Endothelial cell of umbilical vein (primary cell): ENCODE measurements at regions of chr12 and their contacts with region 1.

Region 1: DNA sequence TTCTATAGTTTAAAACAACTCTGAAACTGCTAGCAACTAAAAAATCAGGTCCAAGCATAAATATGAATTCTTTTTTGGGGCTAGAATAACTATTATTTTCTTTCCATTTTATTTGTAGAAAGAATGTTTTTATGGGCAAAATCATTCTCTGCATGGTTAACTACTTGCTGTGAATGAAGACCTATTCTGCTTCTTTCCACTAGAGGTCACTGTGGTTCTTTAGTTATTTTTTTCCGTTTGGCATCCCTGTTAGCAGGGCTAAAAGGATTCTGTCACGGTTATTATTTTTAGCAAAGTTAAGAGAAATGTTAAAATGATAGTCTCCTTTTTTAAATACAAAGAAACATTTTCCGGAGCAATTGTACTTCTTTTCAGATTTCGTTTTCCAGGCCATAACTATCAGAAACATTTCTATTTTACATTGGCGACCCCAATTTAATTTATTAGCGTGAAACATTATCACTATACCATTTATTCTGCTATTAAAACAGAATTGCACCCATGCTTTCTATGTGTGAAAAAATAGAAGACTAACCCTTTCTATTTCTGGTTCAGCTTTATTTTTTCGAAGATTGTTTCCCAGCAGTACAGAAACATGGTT is 404.8 kb downstream of the ATP23 start:
- DNase-seq: peak; percentile 58
- H3K4me3 ChIP-seq: no peak overlapping the region
- H3K27ac ChIP-seq: no peak overlapping the region
- H3K4me1 ChIP-seq: peaks cover 22% of the 10 kb centered on the region
- H3K27me3 ChIP-seq: no peaks in the 10 kb centered on the region
- CTCF ChIP-seq: peak; percentile 34 to 47
- POLR2A ChIP-seq: no peak

Region 2: GRCh38 chr12:58202933-58203718 is 143.0 kb before region 1 on chr12:
- CTCF ChIA-PET with region 1: no interaction called
- POLR2A ChIA-PET with region 1: no interaction called
- dilution Hi-C with region 1: no loop called
- intact Hi-C with region 1: loop called (anchors 5 kb)
- DNase-seq: peak; percentile 90
- H3K4me3 ChIP-seq: no peak overlapping the region
- H3K27ac ChIP-seq: peak overlapping the region; percentile 4
- H3K4me1 ChIP-seq: peaks cover 21% of the 10 kb centered on the region
- H3K27me3 ChIP-seq: no peaks in the 10 kb centered on the region
- CTCF ChIP-seq: no peak
- POLR2A ChIP-seq: no peak

Region 3: GRCh38 chr12:58321414-58321813 is 24.7 kb before region 1 on chr12:
- CTCF ChIA-PET with region 1: no interaction called
- POLR2A ChIA-PET with region 1: no interaction called
- dilution Hi-C with region 1: no loop called
- intact Hi-C with region 1: no loop called
- DNase-seq: no peak
- H3K4me3 ChIP-seq: no peak overlapping the region
- H3K27ac ChIP-seq: no peak overlapping the region
- H3K4me1 ChIP-seq: no peaks in the 10 kb centered on the region
- H3K27me3 ChIP-seq: no peaks in the 10 kb centered on the region
- CTCF ChIP-seq: no peak
- POLR2A ChIP-seq: no peak

Region 4: DNA sequence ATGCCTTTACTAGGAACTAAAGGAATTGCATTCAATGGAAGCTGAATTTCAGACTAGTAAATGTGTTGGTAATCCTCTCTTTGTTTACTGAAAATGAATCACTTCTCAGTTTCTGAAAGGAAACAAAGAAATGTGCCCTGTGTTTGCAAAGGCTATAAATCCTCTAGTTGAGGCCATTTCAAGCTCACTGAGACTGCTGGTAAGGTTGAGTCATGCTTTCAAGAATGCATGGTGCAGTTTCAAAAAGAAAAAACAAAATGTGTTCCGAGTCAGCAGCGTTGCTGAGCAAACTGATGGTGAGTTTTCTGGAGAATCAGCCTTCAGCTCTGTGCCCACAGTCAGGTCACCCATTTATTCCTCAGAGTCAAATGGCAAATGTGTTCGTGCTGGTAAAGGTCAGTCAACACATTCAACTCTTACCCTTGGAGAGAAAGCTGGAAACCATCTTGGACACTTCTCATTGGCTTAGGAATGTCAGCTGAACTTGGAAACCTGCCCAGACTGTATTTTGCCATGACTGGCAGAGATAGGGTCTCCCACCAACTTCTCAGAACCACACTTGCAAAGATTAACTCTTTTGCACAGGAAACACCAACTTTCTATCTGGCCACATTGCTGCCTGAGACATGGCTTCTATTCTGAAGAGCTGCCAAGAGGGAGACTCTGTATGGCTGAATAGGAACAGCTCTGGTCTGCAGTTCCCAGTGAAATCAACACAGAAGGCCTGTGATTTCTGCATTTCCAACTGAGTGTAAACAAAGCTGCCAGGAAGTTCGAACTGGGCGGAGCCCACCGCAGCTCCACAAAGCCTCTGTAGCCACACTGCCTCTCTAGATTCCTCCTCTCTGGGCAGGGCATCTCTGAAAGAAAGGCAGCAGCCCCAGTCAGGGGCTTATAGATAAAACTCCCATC is 79.6 kb after region 1 on chr12:
- CTCF ChIA-PET with region 1: no interaction called
- POLR2A ChIA-PET with region 1: no interaction called
- dilution Hi-C with region 1: no loop called
- intact Hi-C with region 1: loop called (anchors 1 kb)
- DNase-seq: peak; percentile 95
- H3K4me3 ChIP-seq: peak overlapping the region in 1 of 3 experiments; percentile 1
- H3K27ac ChIP-seq: peak overlapping the region; percentile 85
- H3K4me1 ChIP-seq: peaks cover 25% of the 10 kb centered on the region
- H3K27me3 ChIP-seq: no peaks in the 10 kb centered on the region
- CTCF ChIP-seq: no peak
- POLR2A ChIP-seq: no peak

Region 5: DNA sequence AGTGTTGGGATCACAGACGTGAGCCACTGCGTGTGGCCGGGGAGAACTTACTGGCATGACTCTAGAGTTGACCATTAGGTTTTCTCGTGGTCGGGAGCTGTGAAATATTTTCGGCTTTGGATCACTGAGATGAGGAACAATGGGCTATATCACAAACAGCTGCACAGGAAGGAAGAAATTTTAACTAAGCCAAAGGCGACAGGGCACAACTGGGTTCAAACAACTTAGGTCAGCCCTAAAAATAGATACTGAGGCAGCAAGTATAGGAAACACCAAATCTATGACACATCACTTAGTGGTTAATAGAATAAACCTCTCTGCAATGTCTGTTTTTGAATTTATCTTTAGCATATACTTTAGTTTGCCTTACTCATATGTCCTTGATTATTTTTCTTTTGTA is 411.3 kb after region 1 on chr12:
- CTCF ChIA-PET with region 1: no interaction called
- POLR2A ChIA-PET with region 1: no interaction called
- dilution Hi-C with region 1: no loop called
- intact Hi-C with region 1: loop called (anchors 5 kb)
- DNase-seq: peak; percentile 89
- H3K4me3 ChIP-seq: no peak overlapping the region
- H3K27ac ChIP-seq: peak overlapping the region; percentile 87
- H3K4me1 ChIP-seq: peaks cover 16% of the 10 kb centered on the region
- H3K27me3 ChIP-seq: no peaks in the 10 kb centered on the region
- CTCF ChIP-seq: no peak
- POLR2A ChIP-seq: no peak

Region 6: GRCh38 chr12:59087077-59087673 is 741.0 kb after region 1 on chr12:
- CTCF ChIA-PET with region 1: interaction called, 5 read pairs
- POLR2A ChIA-PET with region 1: no interaction called
- dilution Hi-C with region 1: no loop called
- intact Hi-C with region 1: loop called (anchors 1 kb)
- DNase-seq: peak; percentile 55
- H3K4me3 ChIP-seq: no peak overlapping the region
- H3K27ac ChIP-seq: no peak overlapping the region
- H3K4me1 ChIP-seq: peaks cover 12% of the 10 kb centered on the region
- H3K27me3 ChIP-seq: no peaks in the 10 kb centered on the region
- CTCF ChIP-seq: peak; percentile 54 to 59
- POLR2A ChIP-seq: no peak